ENCODE measurements at regions of chr1 and their contacts with region 1.

Region 1: DNA sequence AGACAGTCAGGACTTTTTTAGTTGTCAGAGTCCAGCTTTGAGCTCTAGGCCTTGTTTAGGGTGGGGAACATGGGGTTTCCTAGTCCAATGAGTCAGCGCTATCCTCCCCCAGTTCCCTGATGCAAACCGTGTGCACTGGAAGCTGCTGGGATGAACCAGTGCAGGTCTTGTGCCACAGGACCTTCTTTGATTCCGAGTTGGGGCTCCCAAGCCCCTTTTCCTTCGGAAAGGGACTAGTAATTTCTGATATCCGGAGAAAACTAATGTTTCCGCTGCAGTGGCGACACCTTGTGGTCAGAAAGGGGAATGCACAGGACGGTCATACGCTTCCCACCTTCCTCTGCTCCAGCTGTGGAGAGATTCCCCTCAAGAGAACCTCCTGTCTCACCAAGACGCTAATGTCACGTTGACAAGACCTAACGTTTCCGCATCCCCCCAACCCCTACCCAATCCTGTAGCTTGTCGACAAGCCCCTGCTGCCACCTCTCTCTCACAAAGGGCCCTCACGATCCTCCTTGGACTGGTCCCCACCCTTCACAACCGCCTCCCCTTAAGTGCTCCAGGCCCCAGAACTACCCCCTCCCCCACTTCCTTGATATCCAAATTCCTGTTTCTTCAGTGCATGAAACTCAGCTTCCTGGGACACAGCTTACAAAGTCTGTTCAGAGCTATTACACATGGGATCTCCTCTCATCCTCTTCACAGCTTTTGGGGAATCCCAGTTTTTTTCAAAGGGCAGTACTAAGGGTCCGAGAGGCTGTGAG is 30.9 kb downstream of the GPA33 start:
- DNase-seq: peak; percentile 55 to 75 (median 64)
- ATAC-seq: peak; percentile 89
- H3K4me3 ChIP-seq: no peak overlapping the region
- H3K27ac ChIP-seq: no peak overlapping the region
- H3K4me1 ChIP-seq: peaks cover 3 to 6% of the 10 kb centered on the region in 2 donors
- H3K27me3 ChIP-seq: no peaks in the 10 kb centered on the region
- CTCF ChIP-seq: peak; percentile 88 to 96

Region 2: DNA sequence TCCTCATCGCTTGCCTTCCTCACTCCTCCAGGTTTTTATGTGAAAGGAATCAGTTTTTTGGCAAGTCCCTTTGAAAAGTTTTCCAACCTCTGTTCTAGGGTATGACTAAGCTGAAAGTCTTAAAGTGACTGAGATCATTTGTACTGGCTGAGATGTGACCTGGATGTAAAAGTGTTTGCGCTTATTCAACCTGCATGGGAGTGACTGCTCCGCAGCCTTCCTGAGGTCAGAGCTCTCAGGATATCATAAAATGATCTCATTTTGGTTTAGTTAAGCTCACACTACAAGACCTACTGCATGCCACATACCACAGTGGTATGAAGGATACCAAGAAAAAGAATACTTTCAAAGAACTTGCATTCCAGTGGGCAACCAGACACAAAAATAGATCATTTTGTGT is 153.3 kb before region 1 on chr1:
- intact Hi-C with region 1: loop called in 1 of 2 experiments (anchors 5 kb)
- DNase-seq: no peak
- ATAC-seq: peak; percentile 19
- H3K4me3 ChIP-seq: no peak overlapping the region
- H3K27ac ChIP-seq: no peak overlapping the region
- H3K4me1 ChIP-seq: no peaks in the 10 kb centered on the region
- H3K27me3 ChIP-seq: no peaks in the 10 kb centered on the region
- CTCF ChIP-seq: no peak